Spleen (tissue), 13 donors: ENCODE measurements at regions of chr1 and their contacts with region 1.

Region 1: DNA sequence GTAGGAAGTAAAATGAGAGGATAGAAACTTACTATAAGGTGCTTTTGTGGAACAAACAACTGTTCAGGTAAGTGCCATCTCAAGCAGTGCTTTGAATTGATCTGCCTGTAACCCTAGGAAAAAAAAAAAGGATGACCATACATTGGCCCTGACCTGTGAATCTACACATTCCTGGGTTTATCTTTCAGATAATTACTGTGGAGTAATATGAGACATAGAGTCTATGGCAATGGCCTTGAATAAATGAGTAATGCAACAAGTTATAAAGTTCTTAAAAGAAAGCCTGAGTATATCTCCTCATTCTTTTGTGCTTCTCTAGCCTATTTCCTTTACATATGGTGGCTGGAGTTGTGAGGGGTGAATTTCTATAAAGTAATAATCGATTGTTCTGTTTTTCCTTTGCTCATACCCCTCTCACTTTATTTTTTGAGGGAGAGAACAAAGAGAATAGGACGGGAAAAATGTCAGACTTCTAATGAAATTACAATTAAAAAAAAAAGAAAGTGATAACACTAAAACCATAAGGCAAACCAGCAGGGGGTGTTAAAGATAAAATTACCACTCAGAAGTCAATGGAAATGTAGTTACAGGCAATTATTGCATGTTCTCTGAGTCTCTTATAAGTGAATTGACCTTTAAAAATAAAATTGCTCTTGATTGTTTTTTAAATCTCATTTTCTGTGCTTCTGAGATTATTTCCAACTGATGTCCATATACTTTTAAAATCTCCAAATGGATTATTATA is 12.4 kb upstream of the ATP1A1 start:
- DNase-seq: no peak
- H3K4me3 ChIP-seq: no peak overlapping the region
- H3K27ac ChIP-seq: no peak overlapping the region
- H3K4me1 ChIP-seq: peaks cover 0 to 7% (median 0%) of the 10 kb centered on the region in 6 donors
- H3K27me3 ChIP-seq: no peaks in the 10 kb centered on the region
- CTCF ChIP-seq: peak in 6 of 11 experiments; percentile 17 to 38 (median 32)
- POLR2A ChIP-seq: no peak

Region 2: DNA sequence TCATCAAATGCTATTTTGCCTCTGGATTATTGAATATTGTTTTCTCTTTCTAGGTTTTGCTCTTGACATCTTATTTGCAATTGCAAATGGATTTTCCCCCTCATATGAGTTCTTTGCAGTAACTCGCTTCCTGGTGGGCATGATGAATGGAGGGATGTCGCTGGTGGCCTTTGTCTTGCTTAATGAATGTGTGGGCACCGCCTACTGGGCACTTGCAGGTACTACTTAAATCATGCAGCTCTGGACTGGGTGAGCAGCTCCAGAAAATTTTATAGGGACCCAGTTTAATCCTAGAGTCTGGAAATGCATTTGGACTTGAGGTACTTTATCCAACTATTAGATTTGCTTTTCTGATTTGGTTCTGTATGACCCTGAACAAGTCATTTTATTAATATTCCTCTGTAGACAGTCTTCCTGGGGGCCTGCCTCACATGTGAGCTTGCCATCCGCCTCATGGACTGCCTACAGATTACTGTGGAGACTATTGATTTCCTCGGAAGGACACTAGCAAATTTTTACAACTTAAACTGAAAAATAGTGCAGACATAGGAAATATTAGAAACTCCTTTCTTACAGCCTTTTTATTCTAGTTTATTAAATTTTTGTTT is 339.8 kb before region 1 on chr1:
- intact Hi-C with region 1: no loop called
- DNase-seq: no peak
- H3K4me3 ChIP-seq: no peak overlapping the region
- H3K27ac ChIP-seq: no peak overlapping the region
- H3K4me1 ChIP-seq: no peaks in the 10 kb centered on the region
- H3K27me3 ChIP-seq: no peaks in the 10 kb centered on the region
- CTCF ChIP-seq: peak in 10 of 11 experiments; percentile 23 to 74 (median 55)
- POLR2A ChIP-seq: no peak

Region 3: GRCh38 chr1:116151739-116152576 is 208.6 kb before region 1 on chr1:
- intact Hi-C with region 1: loop called (anchors 10 kb)
- DNase-seq: peak; percentile 93
- H3K4me3 ChIP-seq: peak overlapping the region in 5 of 8 donors; percentile 12 to 60 (median 29)
- H3K27ac ChIP-seq: peak overlapping the region in 4 of 8 donors; percentile 20 to 59 (median 39)
- H3K4me1 ChIP-seq: peaks cover 0 to 12% (median 10%) of the 10 kb centered on the region in 6 donors
- H3K27me3 ChIP-seq: no peaks in the 10 kb centered on the region
- CTCF ChIP-seq: peak; percentile 61 to 96 (median 92)
- POLR2A ChIP-seq: no peak

Region 4: GRCh38 chr1:116418091-116418830 is 57.7 kb after region 1 on chr1:
- intact Hi-C with region 1: no loop called
- DNase-seq: peak; percentile 97
- H3K4me3 ChIP-seq: peak overlapping the region; percentile 63 to 86 (median 72)
- H3K27ac ChIP-seq: peak overlapping the region; percentile 51 to 85 (median 82)
- H3K4me1 ChIP-seq: peaks cover 14 to 39% (median 27%) of the 10 kb centered on the region in 6 donors
- H3K27me3 ChIP-seq: no peaks in the 10 kb centered on the region
- CTCF ChIP-seq: peak in 1 of 11 experiments; percentile 15
- POLR2A ChIP-seq: no peak

Region 5: GRCh38 chr1:116429821-116430374 is 69.3 kb after region 1 on chr1:
- intact Hi-C with region 1: no loop called
- DNase-seq: no peak
- H3K4me3 ChIP-seq: no peak overlapping the region
- H3K27ac ChIP-seq: no peak overlapping the region
- H3K4me1 ChIP-seq: no peaks in the 10 kb centered on the region
- H3K27me3 ChIP-seq: no peaks in the 10 kb centered on the region
- CTCF ChIP-seq: no peak
- POLR2A ChIP-seq: no peak

Region 6: GRCh38 chr1:116485071-116485735 is 124.6 kb after region 1 on chr1:
- intact Hi-C with region 1: loop called (anchors 10 kb)
- DNase-seq: peak; percentile 95
- H3K4me3 ChIP-seq: no peak overlapping the region
- H3K27ac ChIP-seq: no peak overlapping the region
- H3K4me1 ChIP-seq: peaks cover 0 to 22% (median 4%) of the 10 kb centered on the region in 6 donors
- H3K27me3 ChIP-seq: no peaks in the 10 kb centered on the region
- CTCF ChIP-seq: peak; percentile 68 to 96 (median 86)
- POLR2A ChIP-seq: no peak